A549 (cell line): ENCODE measurements at regions of chr10 and their contacts with region 1.

Region 1: DNA sequence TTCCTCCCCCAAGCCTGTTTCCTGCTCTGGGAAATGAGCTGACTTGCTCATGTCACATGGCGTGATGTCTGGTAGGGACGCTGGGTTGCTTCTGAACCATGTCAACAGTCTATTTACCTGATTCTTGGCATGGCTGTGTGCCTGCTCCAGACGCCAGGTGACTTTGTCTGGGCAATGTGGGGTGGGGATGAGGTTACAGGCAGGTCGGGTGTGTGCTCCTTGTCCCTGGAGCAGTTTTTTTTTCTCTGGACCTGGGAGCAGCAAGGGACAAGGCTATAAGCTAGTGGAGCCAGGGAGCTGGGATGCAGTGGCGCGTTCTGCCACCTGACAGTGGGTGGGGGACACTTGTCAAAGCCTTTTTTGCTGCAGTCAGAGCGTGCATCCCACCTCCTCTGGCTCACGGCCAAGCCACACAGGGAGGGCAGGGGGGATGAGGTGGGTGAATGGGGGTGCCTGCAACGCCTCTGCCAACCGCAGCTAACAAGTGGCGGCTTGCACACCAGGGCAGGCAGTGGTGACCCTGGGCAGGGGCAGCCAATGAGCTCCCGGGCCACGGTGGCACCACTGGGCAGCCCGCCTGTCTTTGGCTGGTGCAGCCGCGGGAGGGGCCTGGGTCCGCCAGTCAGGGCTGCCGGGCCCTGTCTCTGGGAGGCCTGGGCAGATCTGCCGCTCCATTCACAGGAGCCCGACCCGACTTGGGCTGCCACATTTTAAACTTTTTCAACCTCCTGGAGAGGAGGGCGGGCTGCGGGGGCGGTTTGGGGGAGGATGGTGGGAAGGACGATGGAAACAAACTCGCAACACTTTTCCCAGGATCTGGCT is 22.9 kb downstream of the DNAJB12 start:
- DNase-seq: peak in 1 of 2 experiments; percentile 64
- ATAC-seq: peak in 1 of 2 experiments; percentile 34; a peak in 3 of 6 replicates
- H3K4me3 ChIP-seq: no peak overlapping the region
- H3K27ac ChIP-seq: peak overlapping the region; percentile 58 to 77
- H3K4me1 ChIP-seq: peaks cover 76% of the 10 kb centered on the region
- CTCF ChIP-seq: no peak
- EP300 ChIP-seq: no peak
- POLR2A ChIP-seq: no peak
- RAD21 ChIP-seq: no peak

Region 2: DNA sequence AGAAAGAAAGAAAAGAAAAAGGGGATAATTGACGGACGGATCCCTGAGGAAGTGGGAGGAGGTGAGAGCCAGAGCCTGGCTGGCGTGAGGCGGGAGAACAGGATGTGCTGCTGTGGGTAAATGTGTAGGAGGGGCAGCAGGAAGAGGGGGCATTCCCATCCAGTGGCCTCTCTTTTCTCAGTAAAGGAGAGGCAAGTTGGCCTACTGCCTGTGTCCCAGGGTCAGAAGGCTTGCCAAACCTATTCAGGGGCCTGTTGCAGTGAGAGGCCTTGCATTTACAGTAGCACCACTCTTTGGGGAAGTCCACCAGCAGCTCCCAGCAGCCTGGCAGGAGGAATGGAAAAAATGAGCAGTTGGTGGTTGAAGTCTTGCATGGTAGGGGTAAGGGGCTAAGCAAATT is 89.1 kb before region 1 on chr10:
- CTCF ChIA-PET with region 1: interaction called, 18 read pairs
- POLR2A ChIA-PET with region 1: no interaction called
- DNase-seq: no peak
- ATAC-seq: no peak
- H3K4me3 ChIP-seq: no peak overlapping the region
- H3K27ac ChIP-seq: peak overlapping the region; percentile 99 to 100
- H3K4me1 ChIP-seq: peaks cover 59% of the 10 kb centered on the region
- CTCF ChIP-seq: no peak
- EP300 ChIP-seq: no peak
- POLR2A ChIP-seq: no peak
- RAD21 ChIP-seq: no peak

Region 3: GRCh38 chr10:72260588-72261322 is 71.1 kb before region 1 on chr10:
- CTCF ChIA-PET with region 1: interaction called, 14 read pairs
- POLR2A ChIA-PET with region 1: no interaction called
- DNase-seq: peak; percentile 91 to 99
- ATAC-seq: peak; percentile 90 to 91
- H3K4me3 ChIP-seq: peak overlapping the region; percentile 41
- H3K27ac ChIP-seq: peak overlapping the region; percentile 99 to 100
- H3K4me1 ChIP-seq: peaks cover 83% of the 10 kb centered on the region
- CTCF ChIP-seq: no peak
- EP300 ChIP-seq: peak; percentile 95 to 97; a peak in 4 of 5 replicates
- POLR2A ChIP-seq: peak; percentile 32
- RAD21 ChIP-seq: peak; percentile 42 to 61

Region 4: GRCh38 chr10:72308320-72308987 is 23.4 kb before region 1 on chr10:
- CTCF ChIA-PET with region 1: interaction called, 44 read pairs
- POLR2A ChIA-PET with region 1: no interaction called
- DNase-seq: peak in 1 of 2 experiments; percentile 89
- ATAC-seq: peak; percentile 86
- H3K4me3 ChIP-seq: 0 out of 3 replicates have a peak overlapping the region, but pooled peaks have one; percentile 11
- H3K27ac ChIP-seq: peak overlapping the region; percentile 90 to 98
- H3K4me1 ChIP-seq: peaks cover 59% of the 10 kb centered on the region
- CTCF ChIP-seq: no peak
- EP300 ChIP-seq: peak in 1 of 2 experiments; percentile 33; a peak in 1 of 5 replicates
- POLR2A ChIP-seq: no peak
- RAD21 ChIP-seq: no peak

Region 5: GRCh38 chr10:72435570-72435969 is 103.8 kb after region 1 on chr10:
- CTCF ChIA-PET with region 1: no interaction called
- POLR2A ChIA-PET with region 1: no interaction called
- DNase-seq: no peak
- ATAC-seq: no peak
- H3K4me3 ChIP-seq: no peak overlapping the region
- H3K27ac ChIP-seq: no peak overlapping the region
- H3K4me1 ChIP-seq: no peaks in the 10 kb centered on the region
- CTCF ChIP-seq: no peak
- EP300 ChIP-seq: no peak
- POLR2A ChIP-seq: no peak
- RAD21 ChIP-seq: no peak